Left cardiac atrium (tissue), 4 donors: ENCODE measurements at regions of chr18 and their contacts with region 1.

Region 1: DNA sequence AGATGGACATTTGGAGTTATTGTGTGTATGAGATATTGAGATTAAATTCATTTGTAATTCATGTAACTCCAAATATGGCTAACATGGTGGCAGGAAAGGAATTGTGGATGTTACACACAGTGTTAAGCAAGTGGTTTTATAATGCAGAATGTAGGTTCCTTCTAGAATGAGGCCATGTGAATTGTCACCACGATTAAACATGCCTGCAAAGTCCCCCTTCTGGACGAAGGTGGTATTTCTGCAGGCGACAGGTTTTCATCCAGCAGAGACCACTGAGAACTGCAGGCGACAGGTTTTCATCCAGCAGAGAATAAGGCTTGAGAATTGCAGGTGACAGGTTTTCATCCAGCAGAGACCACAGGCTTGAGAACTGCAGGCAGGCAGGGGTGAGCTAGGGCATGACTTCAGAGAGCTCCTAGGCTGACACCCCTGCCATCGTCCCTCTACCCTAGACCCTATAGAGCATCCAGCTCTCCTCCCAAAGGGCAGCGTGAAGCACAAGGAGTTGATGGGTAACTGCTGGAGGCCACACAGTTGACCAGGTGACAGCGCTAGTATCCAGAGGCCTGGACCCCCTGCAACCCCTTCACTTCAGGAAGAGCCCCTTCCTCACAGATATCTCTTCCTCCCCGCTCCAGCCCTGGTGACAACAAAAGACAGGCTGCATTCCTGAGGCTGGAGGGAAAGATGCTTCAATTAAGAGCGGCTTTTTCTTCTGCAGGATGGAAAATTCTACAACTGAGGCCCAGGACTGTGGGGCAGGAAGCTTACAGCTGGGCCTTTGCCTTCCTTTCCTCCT is 175.8 kb downstream of the LOXHD1 start:
- DNase-seq: peak; percentile 40
- ATAC-seq: peak in 1 of 2 donors; percentile 41

Region 2: GRCh38 chr18:46148810-46149209 is 332.4 kb before region 1 on chr18:
- intact Hi-C with region 1: loop called in 1 of 2 experiments (anchors 10 kb)
- DNase-seq: no peak
- ATAC-seq: peak; percentile 13 to 50

Region 3: DNA sequence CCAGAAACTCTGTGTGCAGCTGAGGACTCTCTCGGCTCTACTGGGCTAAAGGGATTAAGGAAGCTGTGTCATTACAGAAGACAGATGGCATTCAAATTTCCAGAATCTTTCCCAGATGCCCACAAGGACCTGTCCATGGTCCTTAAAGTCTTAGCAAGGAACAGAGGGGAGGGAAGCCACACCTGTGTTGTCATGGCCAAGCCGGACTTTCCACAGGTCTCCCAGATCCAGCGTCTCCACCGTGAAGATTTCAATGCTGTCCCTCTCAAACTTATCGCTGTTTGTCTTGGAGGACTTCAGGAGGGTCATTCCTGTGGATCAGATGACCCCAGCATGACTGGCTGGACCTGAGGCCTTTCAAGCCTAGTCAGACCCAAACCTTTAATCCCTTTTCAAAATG is 61.3 kb after region 1 on chr18:
- intact Hi-C with region 1: loop called in 1 of 2 experiments (anchors 10 kb)
- DNase-seq: no peak
- ATAC-seq: peak in 1 of 2 donors; percentile 23